CD4-positive, alpha-beta memory T cell (primary cell): ENCODE measurements at regions of chr19 and their contacts with region 1.

Region 1: GRCh38 chr19:45001087-45001739 is at the start of gene RELB:
- DNase-seq: peak; percentile 93 to 97 (median 94)
- H3K4me3 ChIP-seq: peak within 1 kb of the TSS; percentile 47 to 69
- H3K4me3 Mint-ChIP-seq: peak within 1 kb of the TSS; percentile 93 to 99 (median 98)
- H3K27ac ChIP-seq: peak within 1 kb of the TSS; percentile 100
- H3K27ac Mint-ChIP-seq: peak within 1 kb of the TSS; percentile 99 to 100 (median 100)
- H3K4me1 ChIP-seq: peaks cover 13% of the 10 kb centered on the region
- H3K4me1 Mint-ChIP-seq: peaks cover 8 to 25% (median 14%) of the 10 kb centered on the region in 4 donors
- H3K27me3 ChIP-seq: no peaks in the 10 kb centered on the region
- H3K27me3 Mint-ChIP-seq: no peaks in the 10 kb centered on the region
- total RNA-seq, gene RELB: 38.8 to 39.8 TPM

Region 2: GRCh38 chr19:44746946-44747738 is 254.1 kb before region 1 on chr19:
- CTCF ChIA-PET with region 1: no interaction called
- POLR2A ChIA-PET with region 1: no interaction called
- intact Hi-C with region 1: loop called (anchors 5 kb)
- DNase-seq: peak; percentile 81 to 95 (median 86)
- H3K4me3 ChIP-seq: peak overlapping the region; percentile 66
- H3K4me3 Mint-ChIP-seq: peak overlapping the region; percentile 89 to 99 (median 96)
- H3K27ac ChIP-seq: peak overlapping the region; percentile 98
- H3K27ac Mint-ChIP-seq: peak overlapping the region; percentile 85 to 100 (median 97)
- H3K4me1 ChIP-seq: peaks cover 44% of the 10 kb centered on the region
- H3K4me1 Mint-ChIP-seq: peaks cover 30 to 67% (median 45%) of the 10 kb centered on the region in 4 donors
- H3K27me3 ChIP-seq: no peaks in the 10 kb centered on the region
- H3K27me3 Mint-ChIP-seq: no peaks in the 10 kb centered on the region

Region 3: DNA sequence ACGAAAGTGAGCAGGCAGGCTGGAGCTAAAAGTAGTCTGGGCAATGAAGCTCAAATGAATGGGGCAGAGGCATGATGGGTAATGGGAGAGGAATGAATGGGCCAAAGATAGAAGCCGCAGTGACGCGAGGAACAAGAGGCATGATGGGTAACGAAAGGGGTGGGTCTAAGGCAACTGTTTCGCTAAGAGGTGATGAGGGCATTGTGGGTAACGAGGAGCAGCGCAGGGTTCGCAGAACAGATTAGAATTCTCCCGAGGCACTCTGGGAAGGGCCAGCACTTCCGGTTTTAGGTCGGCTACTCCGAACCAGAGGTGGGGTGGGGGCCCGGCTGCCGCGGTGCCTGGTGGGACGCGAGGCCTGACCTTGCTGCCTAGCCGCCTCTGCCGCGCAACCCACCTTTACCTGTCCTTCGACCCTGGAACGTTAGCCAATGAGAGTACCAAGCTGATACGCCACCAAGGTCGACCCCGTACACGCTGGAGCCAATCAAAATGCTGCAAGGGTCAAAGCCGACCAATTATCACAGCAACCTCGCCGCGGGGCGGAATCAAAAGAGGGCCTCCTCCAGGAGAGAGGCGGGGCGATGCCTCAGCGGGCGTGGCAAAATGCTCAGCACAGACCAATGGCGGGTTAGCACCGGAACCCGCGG is 110.7 kb before region 1 on chr19:
- CTCF ChIA-PET with region 1: no interaction called
- POLR2A ChIA-PET with region 1: interaction called, 4 read pairs
- intact Hi-C with region 1: loop called (anchors 5 kb)
- DNase-seq: peak; percentile 100
- H3K4me3 ChIP-seq: peak overlapping the region; percentile 36 to 59
- H3K4me3 Mint-ChIP-seq: peak overlapping the region; percentile 80 to 95 (median 89)
- H3K27ac ChIP-seq: peak overlapping the region; percentile 83
- H3K27ac Mint-ChIP-seq: peak overlapping the region; percentile 83 to 97 (median 95)
- H3K4me1 ChIP-seq: peaks cover 22% of the 10 kb centered on the region
- H3K4me1 Mint-ChIP-seq: peaks cover 19 to 35% (median 28%) of the 10 kb centered on the region in 4 donors
- H3K27me3 ChIP-seq: no peaks in the 10 kb centered on the region
- H3K27me3 Mint-ChIP-seq: no peaks in the 10 kb centered on the region

Region 4: DNA sequence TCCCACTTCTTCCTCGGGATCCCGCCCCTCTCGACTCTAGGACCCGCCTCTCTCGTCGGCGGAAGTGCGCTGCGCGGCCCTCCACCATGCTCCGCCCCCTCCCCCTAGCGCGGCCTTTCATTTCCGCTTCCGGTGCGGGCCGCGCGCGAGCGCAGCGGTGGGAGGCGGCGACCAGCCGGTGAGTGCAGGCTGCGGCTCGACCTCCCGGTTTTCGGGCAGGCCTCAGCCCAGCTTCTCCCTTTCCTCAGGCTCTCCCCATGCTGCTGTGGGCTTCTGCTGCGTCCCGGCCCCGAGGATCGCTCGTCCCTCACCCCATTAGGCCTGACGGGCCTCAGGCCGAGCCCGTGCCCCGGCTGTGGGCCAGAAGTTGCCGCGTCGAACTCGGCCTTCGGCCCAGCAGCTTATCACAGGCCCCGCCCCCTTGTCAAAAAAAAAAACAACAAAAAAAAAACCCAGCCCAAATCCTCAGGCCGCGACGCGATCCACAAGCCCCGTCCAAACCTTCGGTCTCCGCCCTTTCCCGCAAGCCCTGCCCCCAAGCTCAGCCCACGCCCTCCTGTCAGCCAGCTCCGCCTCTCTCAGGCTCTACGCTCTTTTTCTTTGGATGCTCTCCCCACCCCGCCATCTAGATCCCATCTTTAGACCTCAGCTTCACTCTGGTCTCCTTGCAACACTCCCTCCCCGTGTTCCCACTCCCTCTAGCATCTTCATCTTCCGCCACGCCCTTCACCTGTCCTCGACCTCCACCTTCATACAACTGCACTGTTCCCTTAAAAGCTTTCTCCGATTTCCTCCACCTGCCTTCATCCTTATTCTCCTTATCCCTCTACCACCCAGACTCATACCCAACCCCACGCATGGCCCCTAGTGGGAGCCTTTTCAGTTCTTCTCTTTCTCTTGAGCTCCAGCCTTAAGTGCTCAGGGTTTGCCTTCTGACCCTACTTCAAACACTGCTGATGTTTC is 38.0 kb after region 1 on chr19 and contains the start of gene CLASRP:
- CTCF ChIA-PET with region 1: no interaction called
- POLR2A ChIA-PET with region 1: interaction called, 31 read pairs
- intact Hi-C with region 1: loop called (anchors 1 kb)
- DNase-seq: peak; percentile 85 to 88 (median 86)
- H3K4me3 ChIP-seq: peak within 1 kb of the TSS; percentile 45 to 62
- H3K4me3 Mint-ChIP-seq: peak within 1 kb of the TSS; percentile 95 to 99 (median 98)
- H3K27ac ChIP-seq: peak within 1 kb of the TSS; percentile 98
- H3K27ac Mint-ChIP-seq: peak within 1 kb of the TSS; percentile 88 to 99 (median 98)
- H3K4me1 ChIP-seq: peaks cover 34% of the 10 kb centered on the region
- H3K4me1 Mint-ChIP-seq: peaks cover 21 to 46% (median 29%) of the 10 kb centered on the region in 4 donors
- H3K27me3 ChIP-seq: no peaks in the 10 kb centered on the region
- H3K27me3 Mint-ChIP-seq: no peaks in the 10 kb centered on the region
- total RNA-seq, gene CLASRP: 156 to 163 TPM

Region 5: GRCh38 chr19:45059278-45059965 is 58.2 kb after region 1 on chr19:
- CTCF ChIA-PET with region 1: no interaction called
- POLR2A ChIA-PET with region 1: no interaction called
- intact Hi-C with region 1: no loop called
- DNase-seq: peak; percentile 76 to 84 (median 81)
- H3K4me3 ChIP-seq: no peak overlapping the region
- H3K4me3 Mint-ChIP-seq: no peak overlapping the region
- H3K27ac ChIP-seq: no peak overlapping the region
- H3K27ac Mint-ChIP-seq: peak overlapping the region in 6 of 7 donors; percentile 57 to 87 (median 82)
- H3K4me1 ChIP-seq: no peaks in the 10 kb centered on the region
- H3K4me1 Mint-ChIP-seq: peaks cover 0 to 6% (median 4%) of the 10 kb centered on the region in 4 donors
- H3K27me3 ChIP-seq: no peaks in the 10 kb centered on the region
- H3K27me3 Mint-ChIP-seq: no peaks in the 10 kb centered on the region

Region 6: DNA sequence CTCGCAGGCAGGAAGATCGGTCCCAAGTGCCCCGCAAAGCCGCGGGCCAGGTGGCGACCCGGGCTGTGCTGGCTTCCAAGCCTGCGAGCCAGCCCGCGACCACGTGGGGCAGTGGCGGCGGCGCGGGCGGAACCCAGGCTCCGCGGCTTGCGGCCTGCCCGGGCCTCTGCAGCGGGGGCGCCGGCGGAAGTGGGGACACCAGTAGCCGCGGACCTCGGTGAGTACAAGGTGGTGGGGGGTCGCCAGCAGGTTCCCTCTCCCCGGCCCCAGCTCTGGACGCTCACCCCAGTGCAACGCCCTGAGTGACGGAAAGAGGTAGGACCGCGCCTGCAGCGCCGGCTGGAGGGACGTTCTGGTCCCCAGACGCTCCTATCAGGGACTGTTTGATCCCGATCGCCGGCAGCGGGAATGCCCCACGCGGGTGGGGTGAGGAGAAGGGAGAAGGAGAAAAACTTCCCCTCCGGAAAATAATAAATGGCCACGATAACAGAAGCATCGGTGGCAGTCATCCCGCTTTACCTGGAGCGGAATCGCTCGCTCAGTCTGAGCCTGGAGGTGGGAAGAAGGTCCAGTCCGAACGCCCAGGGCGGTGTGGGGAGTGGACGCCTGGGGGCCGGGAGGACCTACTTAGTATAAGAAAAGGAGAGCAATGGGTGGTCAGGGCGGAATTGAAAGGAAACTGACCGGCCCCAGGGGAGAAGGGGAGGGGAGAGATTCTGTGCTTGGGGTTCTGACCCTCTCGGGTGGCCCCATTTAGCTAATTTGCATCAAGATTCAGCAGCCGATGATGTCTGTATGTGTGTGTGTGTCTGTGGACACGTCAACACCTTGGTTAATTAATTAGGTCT is 78.1 kb after region 1 on chr19 and contains the start of gene GEMIN7:
- CTCF ChIA-PET with region 1: no interaction called
- POLR2A ChIA-PET with region 1: interaction called, 6 read pairs
- intact Hi-C with region 1: loop called (anchors 5 kb)
- DNase-seq: peak; percentile 66 to 77 (median 72)
- H3K4me3 ChIP-seq: peak within 1 kb of the TSS; percentile 82 to 95
- H3K4me3 Mint-ChIP-seq: peak within 1 kb of the TSS; percentile 89 to 98 (median 93)
- H3K27ac ChIP-seq: peak within 1 kb of the TSS; percentile 80
- H3K27ac Mint-ChIP-seq: peak within 1 kb of the TSS; percentile 84 to 95 (median 88)
- H3K4me1 ChIP-seq: peaks cover 51% of the 10 kb centered on the region
- H3K4me1 Mint-ChIP-seq: peaks cover 25 to 60% (median 44%) of the 10 kb centered on the region in 4 donors
- H3K27me3 ChIP-seq: no peaks in the 10 kb centered on the region
- H3K27me3 Mint-ChIP-seq: no peaks in the 10 kb centered on the region
- total RNA-seq, gene GEMIN7: 15.9 to 17.6 TPM